ENCODE measurements at regions of chr19 and their contacts with region 1.

Region 1: DNA sequence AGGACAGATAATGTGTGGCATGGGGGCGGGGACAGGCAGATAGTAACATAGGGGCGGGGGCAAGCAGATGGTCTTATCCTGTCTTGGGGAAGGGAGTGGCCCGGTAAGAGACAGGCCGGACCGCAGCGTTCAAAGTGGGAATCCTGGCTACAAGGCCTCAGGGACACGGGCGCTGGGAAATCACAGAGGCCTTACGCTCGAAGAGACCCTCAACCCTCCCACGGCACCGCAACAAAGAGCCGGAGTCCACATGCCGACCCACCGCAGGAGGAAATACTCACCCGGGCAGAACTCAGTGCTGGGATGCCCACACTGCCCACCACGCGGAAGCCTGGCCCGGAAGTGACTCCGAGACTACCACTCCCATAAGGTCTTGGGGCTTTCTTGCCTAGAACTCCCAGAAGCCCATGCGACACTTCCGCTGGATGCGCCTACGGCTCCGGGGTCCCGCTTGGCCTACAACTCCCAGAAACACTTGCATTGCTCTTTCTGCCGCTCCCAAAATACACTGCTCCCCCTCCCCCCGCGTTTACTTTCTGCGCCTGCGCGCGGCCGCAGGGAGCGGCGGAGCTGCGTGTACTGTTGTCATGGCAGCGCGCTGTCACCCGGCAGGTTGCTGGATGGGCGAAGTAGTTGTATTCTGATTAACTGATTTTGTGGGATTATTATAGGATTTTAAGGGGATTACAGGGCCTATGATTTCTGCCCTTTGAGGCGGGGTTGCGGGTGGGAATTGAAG is at the start of gene CTU1:
- DNase-seq: peak; percentile 97 to 99 (median 98)
- ATAC-seq: peak; percentile 98
- H3K4me3 ChIP-seq: peak within 1 kb of the TSS; percentile 63 to 73
- H3K4me3 Mint-ChIP-seq: peak within 1 kb of the TSS; percentile 97
- H3K27ac ChIP-seq: peak within 1 kb of the TSS; percentile 82 to 88
- H3K27ac Mint-ChIP-seq: peak within 1 kb of the TSS; percentile 96
- H3K4me1 ChIP-seq: peaks cover 19% of the 10 kb centered on the region
- H3K4me1 Mint-ChIP-seq: peaks cover 44% of the 10 kb centered on the region
- H3K27me3 ChIP-seq: no peaks in the 10 kb centered on the region
- H3K27me3 Mint-ChIP-seq: no peaks in the 10 kb centered on the region
- CTCF ChIP-seq: no peak
- total RNA-seq, gene CTU1: 1.7 TPM

Region 2: DNA sequence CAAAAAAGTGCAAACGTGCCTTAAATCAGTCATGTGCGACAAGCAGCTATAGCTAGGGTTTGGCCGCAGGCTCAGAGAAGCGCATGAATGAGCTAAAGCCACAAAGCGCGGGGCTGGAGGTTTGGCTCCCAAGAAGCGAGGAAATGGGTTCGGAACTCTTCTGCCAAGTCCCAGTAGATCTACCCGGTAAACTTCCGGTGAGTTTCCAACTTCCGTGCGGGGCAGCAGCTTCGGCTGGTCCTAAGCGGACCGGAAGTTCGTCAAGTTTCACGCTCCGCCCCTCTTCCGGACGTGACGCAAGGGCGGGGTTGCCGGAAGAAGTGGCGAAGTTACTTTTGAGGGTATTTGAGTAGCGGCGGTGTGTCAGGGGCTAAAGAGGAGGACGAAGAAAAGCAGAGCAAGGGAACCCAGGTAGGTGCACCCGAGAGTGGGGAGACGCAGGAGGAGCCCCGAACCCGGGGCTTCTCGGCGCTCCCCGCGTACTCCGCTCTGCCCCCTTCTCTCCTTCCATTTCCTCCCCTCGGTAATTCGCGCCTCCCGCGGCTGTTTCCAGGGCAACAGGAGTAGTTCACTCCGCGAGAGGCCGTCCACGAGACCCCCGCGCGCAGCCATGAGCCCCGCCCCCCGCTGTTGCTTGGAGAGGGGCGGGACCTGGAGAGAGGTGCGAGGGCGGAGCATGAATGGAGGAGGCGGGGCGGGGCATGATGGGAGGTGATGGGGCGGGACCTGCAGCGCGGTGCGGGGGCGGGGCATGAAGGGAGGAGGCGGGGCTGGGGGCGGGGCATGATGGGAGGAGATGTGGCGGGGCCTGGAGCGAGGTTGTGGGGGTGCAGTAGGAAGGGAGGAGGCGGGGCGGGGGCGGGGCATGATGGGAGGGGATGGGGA is 731.8 kb before region 1 on chr19 and contains the start of gene NR1H2:
- CTCF ChIA-PET with region 1: no interaction called
- POLR2A ChIA-PET with region 1: no interaction called
- intact Hi-C with region 1: loop called (anchors 1 to 2 kb)
- DNase-seq: peak; percentile 89 to 99 (median 95)
- ATAC-seq: peak; percentile 90
- H3K4me3 ChIP-seq: peak within 1 kb of the TSS; percentile 73 to 93
- H3K4me3 Mint-ChIP-seq: peak within 1 kb of the TSS; percentile 99
- H3K27ac ChIP-seq: peak within 1 kb of the TSS; percentile 99 to 100
- H3K27ac Mint-ChIP-seq: peak within 1 kb of the TSS; percentile 100
- H3K4me1 ChIP-seq: peaks cover 11% of the 10 kb centered on the region
- H3K4me1 Mint-ChIP-seq: peaks cover 22% of the 10 kb centered on the region
- H3K27me3 ChIP-seq: no peaks in the 10 kb centered on the region
- H3K27me3 Mint-ChIP-seq: no peaks in the 10 kb centered on the region
- CTCF ChIP-seq: no peak
- total RNA-seq, gene NR1H2: 320 to 327 TPM

Region 3: GRCh38 chr19:50804420-50805272 is 303.6 kb before region 1 on chr19:
- CTCF ChIA-PET with region 1: no interaction called
- POLR2A ChIA-PET with region 1: no interaction called
- intact Hi-C with region 1: loop called (anchors 5 to 10 kb)
- DNase-seq: peak; percentile 91 to 99 (median 96)
- ATAC-seq: peak; percentile 95
- H3K4me3 ChIP-seq: peak overlapping the region; percentile 91 to 96
- H3K4me3 Mint-ChIP-seq: peak overlapping the region; percentile 98
- H3K27ac ChIP-seq: peak overlapping the region; percentile 99
- H3K27ac Mint-ChIP-seq: peak overlapping the region; percentile 100
- H3K4me1 ChIP-seq: peaks cover 18% of the 10 kb centered on the region
- H3K4me1 Mint-ChIP-seq: peaks cover 43% of the 10 kb centered on the region
- H3K27me3 ChIP-seq: no peaks in the 10 kb centered on the region
- H3K27me3 Mint-ChIP-seq: no peaks in the 10 kb centered on the region
- CTCF ChIP-seq: no peak

Region 4: GRCh38 chr19:51131780-51132680 is 23.8 kb after region 1 on chr19:
- CTCF ChIA-PET with region 1: interaction called, 4 read pairs
- POLR2A ChIA-PET with region 1: no interaction called
- intact Hi-C with region 1: loop called in 1 of 2 experiments (anchors 1 kb)
- DNase-seq: peak in 6 of 9 experiments; percentile 28 to 75 (median 55)
- ATAC-seq: peak; percentile 69
- H3K4me3 ChIP-seq: peak overlapping the region in 1 of 2 experiments; percentile 7
- H3K4me3 Mint-ChIP-seq: peak overlapping the region; percentile 76
- H3K27ac ChIP-seq: peak overlapping the region in 1 of 2 experiments; percentile 55
- H3K27ac Mint-ChIP-seq: peak overlapping the region; percentile 82
- H3K4me1 ChIP-seq: peaks cover 63% of the 10 kb centered on the region
- H3K4me1 Mint-ChIP-seq: peaks cover 61% of the 10 kb centered on the region
- H3K27me3 ChIP-seq: no peaks in the 10 kb centered on the region
- H3K27me3 Mint-ChIP-seq: no peaks in the 10 kb centered on the region
- CTCF ChIP-seq: no peak

Region 5: GRCh38 chr19:51570962-51571575 is 462.8 kb after region 1 on chr19 and contains the start of gene ZNF175:
- CTCF ChIA-PET with region 1: no interaction called
- POLR2A ChIA-PET with region 1: no interaction called
- intact Hi-C with region 1: loop called in 1 of 2 experiments (anchors 2 kb)
- DNase-seq: peak; percentile 70 to 94 (median 87)
- ATAC-seq: peak; percentile 98
- H3K4me3 ChIP-seq: peak within 1 kb of the TSS; percentile 65 to 80
- H3K4me3 Mint-ChIP-seq: peak within 1 kb of the TSS; percentile 97
- H3K27ac ChIP-seq: no peak within 1 kb of the TSS
- H3K27ac Mint-ChIP-seq: peak within 1 kb of the TSS; percentile 85
- H3K4me1 ChIP-seq: peaks cover 19% of the 10 kb centered on the region
- H3K4me1 Mint-ChIP-seq: peaks cover 41% of the 10 kb centered on the region
- H3K27me3 ChIP-seq: no peaks in the 10 kb centered on the region
- H3K27me3 Mint-ChIP-seq: peaks cover 4% of the 10 kb centered on the region
- CTCF ChIP-seq: no peak
- total RNA-seq, gene ZNF175: 0.84 to 1.4 TPM